Natural killer cell (primary cell): ENCODE measurements at regions of chr6 and their contacts with region 1.

Region 1: GRCh38 chr6:100404051-100404450 is 60.7 kb downstream of the SIM1 start:
- DNase-seq: no peak
- ATAC-seq: no peak
- H3K4me3 ChIP-seq: no peak overlapping the region
- H3K4me3 Mint-ChIP-seq: no peak overlapping the region
- H3K27ac ChIP-seq: no peak overlapping the region
- H3K27ac Mint-ChIP-seq: no peak overlapping the region
- H3K4me1 ChIP-seq: no peaks in the 10 kb centered on the region
- H3K4me1 Mint-ChIP-seq: no peaks in the 10 kb centered on the region
- H3K27me3 ChIP-seq: no peaks in the 10 kb centered on the region
- H3K27me3 Mint-ChIP-seq: peaks cover 3 to 8% of the 10 kb centered on the region in 2 donors
- CTCF ChIP-seq: no peak

Region 2: DNA sequence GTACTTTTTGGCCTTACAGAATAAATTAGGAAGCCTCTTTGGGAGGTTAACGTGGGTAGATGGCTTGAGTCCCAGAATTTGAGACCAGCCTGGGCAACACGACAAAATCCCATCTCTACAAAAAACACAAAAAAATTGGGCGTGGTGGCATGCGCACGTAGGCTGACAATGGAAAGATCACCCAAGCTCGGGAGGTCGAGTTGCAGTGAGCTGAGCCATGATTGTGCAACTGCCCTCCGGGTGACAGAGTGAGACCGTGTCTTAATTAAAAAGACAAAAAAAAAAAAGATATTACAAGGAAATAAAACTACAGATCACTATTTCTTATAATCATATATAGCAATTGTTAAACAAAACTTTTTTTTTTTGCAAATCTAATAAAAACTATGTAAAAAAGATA is 520.5 kb after region 1 on chr6:
- intact Hi-C with region 1: loop called (anchors 10 kb)
- DNase-seq: no peak
- ATAC-seq: no peak
- H3K4me3 ChIP-seq: no peak overlapping the region
- H3K4me3 Mint-ChIP-seq: no peak overlapping the region
- H3K27ac ChIP-seq: no peak overlapping the region
- H3K27ac Mint-ChIP-seq: no peak overlapping the region
- H3K4me1 ChIP-seq: no peaks in the 10 kb centered on the region
- H3K4me1 Mint-ChIP-seq: no peaks in the 10 kb centered on the region
- H3K27me3 ChIP-seq: peaks cover 2% of the 10 kb centered on the region
- H3K27me3 Mint-ChIP-seq: peaks cover 0 to 8% of the 10 kb centered on the region in 2 donors
- CTCF ChIP-seq: no peak